Common myeloid progenitor, CD34-positive (primary cell): ENCODE measurements at regions of chr1 and their contacts with region 1.

Region 1: DNA sequence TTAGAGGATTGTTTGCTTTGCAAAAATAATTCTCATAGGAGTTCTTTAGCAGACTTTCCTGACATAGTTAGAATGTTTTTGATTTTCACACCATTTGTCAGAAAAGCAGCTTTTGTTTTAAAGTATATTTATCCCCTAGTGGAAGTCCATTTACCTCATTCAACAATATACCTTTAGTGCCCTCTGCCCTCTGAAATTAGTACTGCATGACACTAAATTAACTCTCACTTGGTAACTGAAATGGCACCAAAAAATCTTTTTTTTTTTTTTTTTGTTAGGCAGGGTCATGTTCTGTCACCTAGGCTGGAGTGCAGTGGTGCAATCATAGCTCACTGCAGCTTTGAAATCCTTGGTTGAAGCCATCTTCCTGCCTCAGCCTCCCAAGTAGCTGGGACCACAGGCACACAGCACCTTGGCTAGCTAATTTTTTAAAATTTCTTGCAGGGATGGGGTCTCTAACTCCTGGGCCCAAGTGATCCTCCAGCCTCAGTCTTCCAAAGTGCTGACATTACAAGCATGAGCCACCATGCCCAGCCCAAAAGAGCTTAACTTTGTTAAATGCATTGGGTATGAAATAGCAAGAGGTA is 13.6 kb downstream of the LRRC42 start:
- DNase-seq: peak; percentile 62 to 85 (median 76)
- H3K4me3 ChIP-seq: no peak overlapping the region
- H3K27ac ChIP-seq: no peak overlapping the region
- H3K4me1 ChIP-seq: peaks cover 0 to 8% (median 2%) of the 10 kb centered on the region in 4 experiments
- H3K27me3 ChIP-seq: no peaks in the 10 kb centered on the region

Region 2: DNA sequence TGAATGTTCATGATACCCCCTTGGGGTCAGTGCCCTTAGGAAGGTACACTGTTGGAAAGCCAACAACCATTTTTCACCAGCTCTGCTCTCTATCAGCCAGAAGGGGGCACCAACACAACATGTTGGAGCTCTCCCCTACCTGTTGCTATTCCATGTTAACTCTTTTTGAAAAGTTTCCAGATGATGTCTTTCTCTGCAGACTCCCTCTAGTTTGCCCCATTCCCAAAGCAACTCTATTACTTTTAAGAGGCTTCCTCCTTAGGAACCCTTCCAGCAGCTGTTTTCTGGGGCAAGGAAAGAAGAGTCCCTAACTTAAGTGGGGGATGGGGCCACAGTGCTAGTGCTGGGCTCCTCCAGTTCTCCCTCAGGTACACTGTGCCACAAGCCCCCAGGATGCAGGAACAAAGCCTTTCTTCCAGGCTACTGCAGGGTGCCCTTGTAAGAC is 98.8 kb before region 1 on chr1:
- CTCF ChIA-PET with region 1: interaction called, 147 read pairs
- POLR2A ChIA-PET with region 1: no interaction called
- DNase-seq: peak; percentile 63 to 78 (median 72)
- H3K4me3 ChIP-seq: no peak overlapping the region
- H3K27ac ChIP-seq: no peak overlapping the region
- H3K4me1 ChIP-seq: peaks cover 0 to 7% (median 3%) of the 10 kb centered on the region in 4 experiments
- H3K27me3 ChIP-seq: no peaks in the 10 kb centered on the region

Region 3: GRCh38 chr1:53869454-53870117 is 90.2 kb before region 1 on chr1:
- CTCF ChIA-PET with region 1: interaction called, 16 read pairs
- POLR2A ChIA-PET with region 1: no interaction called
- DNase-seq: peak; percentile 48 to 86 (median 82)
- H3K4me3 ChIP-seq: no peak overlapping the region
- H3K27ac ChIP-seq: no peak overlapping the region
- H3K4me1 ChIP-seq: peaks cover 0 to 6% (median 4%) of the 10 kb centered on the region in 4 experiments
- H3K27me3 ChIP-seq: no peaks in the 10 kb centered on the region